GM10248 (cell line): ENCODE measurements at regions of chr17 and their contacts with region 1.

Region 1: DNA sequence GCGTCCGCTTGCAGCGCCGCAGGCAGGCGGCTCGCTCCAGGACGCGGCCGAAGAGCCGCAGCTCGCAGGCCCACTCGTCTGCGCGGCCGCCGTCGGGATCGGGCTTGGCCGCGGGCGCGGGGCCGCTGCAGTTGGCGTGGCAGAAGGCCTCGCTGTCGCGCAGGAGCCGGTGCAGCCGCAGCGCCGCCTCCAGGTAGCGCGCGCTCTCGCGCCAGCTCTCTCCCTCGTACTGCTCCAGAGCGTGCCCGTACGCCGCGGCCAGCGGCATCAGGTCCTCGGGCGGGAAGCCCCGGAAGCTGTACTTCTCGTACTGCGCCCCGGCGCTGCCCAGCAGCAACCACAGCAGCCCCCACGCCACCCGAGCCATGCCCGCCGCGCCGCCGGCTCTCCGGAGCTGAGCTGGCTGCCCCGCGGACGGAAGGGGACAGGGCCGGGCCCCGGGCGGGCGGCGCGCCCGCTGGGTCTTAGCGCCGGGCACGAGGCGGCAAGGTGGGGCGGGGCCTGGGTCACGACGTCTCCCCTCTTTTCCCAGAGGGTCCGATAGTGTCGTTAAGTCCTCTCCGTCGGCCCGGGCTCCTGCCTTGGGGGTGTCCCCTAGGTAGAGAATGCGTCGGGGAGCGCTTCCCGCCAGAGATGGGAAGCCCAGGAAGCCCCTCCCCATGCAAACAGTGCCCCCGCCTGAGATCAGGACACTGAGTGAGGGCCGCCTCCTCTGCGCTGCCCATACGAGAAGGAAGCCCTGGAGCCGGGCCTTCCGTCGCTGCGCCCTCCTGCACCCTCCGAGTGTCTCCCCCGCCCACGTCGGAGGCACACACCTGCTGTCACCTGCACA is at the start of gene P3H4:
- DNase-seq: peak; percentile 85
- CTCF ChIP-seq: peak; percentile 76

Region 2: GRCh38 chr17:41835800-41836549 is 24.2 kb after region 1 on chr17 and contains the start of gene NT5C3B:
- CTCF ChIA-PET with region 1: interaction called, 12 read pairs
- POLR2A ChIA-PET with region 1: no interaction called
- DNase-seq: peak; percentile 88
- CTCF ChIP-seq: no peak

Region 3: DNA sequence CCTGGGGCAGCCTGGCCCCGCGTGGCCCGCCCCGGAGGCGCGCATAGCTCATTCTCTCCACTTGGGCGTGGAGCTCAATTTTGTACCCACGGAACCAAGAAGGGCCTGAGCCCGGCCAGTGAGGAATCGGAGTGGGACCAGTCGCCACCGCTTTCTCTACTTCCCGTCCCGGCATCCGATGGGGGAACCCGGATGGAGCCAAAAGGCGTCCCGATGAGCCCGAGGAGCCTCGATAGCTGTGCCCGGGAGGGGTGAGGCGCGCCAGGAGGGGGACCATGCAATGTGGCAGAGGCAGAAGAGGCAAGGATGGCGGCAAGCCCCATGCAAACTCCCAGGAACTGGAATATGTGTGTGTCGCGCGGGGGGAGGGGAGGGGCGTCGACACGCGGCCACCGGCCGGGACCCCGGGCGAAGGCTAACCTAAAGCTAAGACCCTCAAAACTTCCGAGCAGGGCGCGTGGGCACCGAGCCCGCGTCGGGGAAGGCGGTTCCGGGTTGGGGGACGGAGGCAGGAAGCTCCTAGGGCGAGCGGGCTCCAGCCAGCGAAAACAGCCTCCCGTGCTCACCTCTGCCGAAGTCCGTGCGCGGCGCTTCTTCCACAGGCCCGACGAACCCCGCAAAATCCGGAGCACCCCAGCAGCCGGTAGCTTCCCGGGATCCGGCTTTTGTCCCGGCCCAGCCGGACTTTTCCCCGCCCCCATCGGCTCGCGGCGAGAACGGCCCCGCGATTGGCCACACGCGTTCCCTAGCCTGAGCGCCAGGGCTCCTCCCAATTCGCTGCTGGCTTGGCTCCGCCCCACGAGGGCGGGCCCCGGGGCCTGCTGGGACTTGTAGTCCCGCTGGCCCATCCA is 106.8 kb after region 1 on chr17 and contains the start of gene ACLY:
- CTCF ChIA-PET with region 1: no interaction called
- POLR2A ChIA-PET with region 1: no interaction called
- DNase-seq: peak; percentile 100
- CTCF ChIP-seq: no peak